Activated CD4-positive, alpha-beta T cell treated with anti-CD3 and anti-CD28 coated beads, Interleukin-2, amount 10 ng/mL, durations not matched to agents 24 days and 14 days (primary cell): ENCODE measurements at regions of chr1 and their contacts with region 1.

Region 1: DNA sequence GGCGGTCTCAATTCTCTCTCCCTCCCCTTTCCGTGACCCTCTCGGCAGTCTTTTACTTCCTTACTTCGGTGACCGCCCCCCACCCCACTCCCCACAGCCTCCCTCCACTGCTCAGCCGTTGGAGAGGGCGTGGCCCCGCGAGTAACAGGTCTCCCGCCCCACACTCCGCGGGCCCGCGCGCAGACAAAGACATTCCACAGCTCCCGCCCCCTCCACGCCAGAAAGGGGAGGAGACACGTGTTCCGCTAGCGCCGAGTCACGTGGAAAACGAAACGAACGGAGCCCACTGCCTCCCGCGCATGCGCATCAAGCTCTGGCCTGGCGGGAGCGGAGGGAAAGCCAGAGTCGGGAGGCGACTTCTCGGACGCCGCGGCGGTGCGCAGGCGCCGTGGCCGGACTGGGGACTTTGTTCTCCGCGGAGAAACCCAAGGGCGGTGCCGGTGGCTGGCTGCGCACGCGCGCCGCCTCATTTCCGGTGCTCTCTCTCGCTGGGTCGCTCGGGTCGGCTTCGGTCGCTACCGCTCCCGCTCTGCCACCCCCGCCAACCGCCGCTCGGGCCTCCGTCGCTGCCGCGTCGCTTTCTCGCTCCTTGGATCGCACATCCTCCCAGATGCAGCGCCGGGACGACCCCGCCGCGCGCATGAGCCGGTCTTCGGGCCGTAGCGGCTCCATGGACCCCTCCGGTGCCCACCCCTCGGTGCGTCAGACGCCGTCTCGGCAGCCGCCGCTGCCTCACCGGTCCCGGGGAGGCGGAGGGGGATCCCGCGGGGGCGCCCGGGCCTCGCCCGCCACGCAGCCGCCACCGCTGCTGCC is at the start of gene KHDRBS1:
- DNase-seq: peak; percentile 100
- H3K4me3 Mint-ChIP-seq: peak within 1 kb of the TSS; percentile 100
- H3K27ac Mint-ChIP-seq: peak within 1 kb of the TSS; percentile 96
- H3K4me1 Mint-ChIP-seq: peaks cover 37% of the 10 kb centered on the region
- H3K27me3 Mint-ChIP-seq: peaks cover 4% of the 10 kb centered on the region
- total RNA-seq, gene KHDRBS1: 174 and 175 TPM in 2 replicates

Region 2: DNA sequence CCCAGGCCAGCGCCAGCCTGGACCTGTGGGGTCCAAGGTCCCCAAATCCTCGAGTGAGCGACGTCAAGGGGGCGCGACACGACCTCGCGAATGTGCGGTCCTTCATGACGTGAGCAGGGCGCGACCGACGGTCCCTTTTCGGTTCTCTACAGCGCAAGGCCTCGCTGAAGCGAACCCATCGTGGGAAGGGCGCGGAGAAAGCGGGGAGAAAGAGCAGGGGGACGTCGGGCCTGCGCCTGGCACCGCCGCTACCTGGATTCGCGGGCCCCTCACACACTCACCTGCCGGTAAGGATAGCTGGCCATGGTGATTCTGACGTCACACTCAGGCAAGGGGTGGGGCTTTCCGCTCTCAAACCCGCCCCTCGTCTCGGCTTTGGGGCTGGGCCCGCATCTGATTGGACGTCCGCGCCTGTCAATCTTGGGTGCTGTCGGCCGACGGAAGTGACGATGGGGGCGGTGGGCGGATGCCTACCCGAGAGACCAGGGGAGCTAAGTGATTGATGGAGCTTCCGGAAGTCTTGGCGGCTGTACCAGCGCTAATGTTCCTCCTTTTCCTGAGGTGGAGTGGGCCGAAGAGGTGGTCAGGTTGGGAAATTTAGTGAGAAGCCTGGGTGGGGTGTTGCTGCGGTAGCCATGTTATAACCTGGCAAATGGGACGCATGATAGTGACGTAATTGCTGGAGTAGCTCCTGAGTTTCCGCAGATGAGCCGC is 368.9 kb before region 1 on chr1 and contains the start of gene PEF1:
- intact Hi-C with region 1: loop called (anchors 5 kb)
- DNase-seq: peak; percentile 100
- H3K4me3 Mint-ChIP-seq: peak within 1 kb of the TSS; percentile 97
- H3K27ac Mint-ChIP-seq: peak within 1 kb of the TSS; percentile 100
- H3K4me1 Mint-ChIP-seq: peaks cover 20% of the 10 kb centered on the region
- H3K27me3 Mint-ChIP-seq: no peaks in the 10 kb centered on the region
- total RNA-seq, gene PEF1: 64.0 and 64.4 TPM in 2 replicates

Region 3: GRCh38 chr1:31753707-31754349 is 259.8 kb before region 1 on chr1:
- intact Hi-C with region 1: no loop called
- DNase-seq: no peak
- H3K4me3 Mint-ChIP-seq: no peak overlapping the region
- H3K27ac Mint-ChIP-seq: no peak overlapping the region
- H3K4me1 Mint-ChIP-seq: peaks cover 14% of the 10 kb centered on the region
- H3K27me3 Mint-ChIP-seq: peaks cover 20% of the 10 kb centered on the region

Region 4: GRCh38 chr1:31938174-31938950 is 75.2 kb before region 1 on chr1 and contains the start of gene PTP4A2:
- intact Hi-C with region 1: loop called (anchors 2 kb)
- DNase-seq: peak; percentile 96
- H3K4me3 Mint-ChIP-seq: peak within 1 kb of the TSS; percentile 95
- H3K27ac Mint-ChIP-seq: peak within 1 kb of the TSS; percentile 96
- H3K4me1 Mint-ChIP-seq: peaks cover 66% of the 10 kb centered on the region
- H3K27me3 Mint-ChIP-seq: no peaks in the 10 kb centered on the region
- total RNA-seq, gene PTP4A2: 363 and 390 TPM in 2 replicates

Region 5: DNA sequence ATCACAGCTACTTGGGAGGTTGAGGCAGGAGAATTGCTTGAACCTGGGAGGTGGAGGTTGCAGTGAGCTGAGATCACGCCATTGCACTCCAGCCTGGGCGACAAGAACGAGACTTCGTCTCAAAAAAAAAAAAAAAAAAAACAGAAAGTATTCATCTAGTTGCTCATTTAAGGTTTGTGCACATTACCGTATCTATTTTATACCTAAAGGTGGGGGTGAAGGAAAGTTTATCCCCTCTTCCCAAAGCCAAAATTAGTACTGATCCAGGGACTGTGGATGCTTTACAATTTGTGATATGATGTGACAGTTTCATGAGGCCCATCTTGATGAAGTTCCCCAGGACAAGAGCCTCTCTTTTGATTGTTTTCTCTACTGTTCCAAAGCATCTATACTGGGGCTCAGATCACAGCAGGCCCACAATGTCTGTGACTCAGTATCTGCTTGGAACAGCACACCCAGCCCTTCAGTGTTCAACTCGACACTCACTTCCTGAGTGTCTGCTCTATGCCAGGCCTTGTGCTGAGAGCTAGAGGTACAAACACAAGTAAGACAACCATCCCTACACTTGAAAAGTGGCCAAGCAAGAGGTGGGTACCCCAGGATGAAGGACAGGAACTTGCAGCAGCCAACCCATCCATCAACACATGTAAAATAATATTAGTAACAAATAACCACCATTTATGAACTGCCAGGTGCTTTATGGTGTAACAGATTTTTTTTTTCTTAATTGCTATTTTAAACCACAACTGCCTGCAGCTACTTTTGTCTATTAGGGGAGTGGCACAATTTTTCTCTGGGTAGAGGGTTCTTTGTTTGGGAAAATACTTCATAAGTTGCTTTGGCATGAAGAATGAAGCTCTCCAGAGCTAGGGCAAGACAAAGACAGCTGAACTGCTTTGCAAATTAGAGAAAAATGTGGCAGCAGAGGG is 28.9 kb before region 1 on chr1:
- intact Hi-C with region 1: loop called (anchors 2 kb)
- DNase-seq: peak; percentile 76
- H3K4me3 Mint-ChIP-seq: peak overlapping the region; percentile 71
- H3K27ac Mint-ChIP-seq: peak overlapping the region; percentile 95
- H3K4me1 Mint-ChIP-seq: peaks cover 47% of the 10 kb centered on the region
- H3K27me3 Mint-ChIP-seq: no peaks in the 10 kb centered on the region

Region 6: DNA sequence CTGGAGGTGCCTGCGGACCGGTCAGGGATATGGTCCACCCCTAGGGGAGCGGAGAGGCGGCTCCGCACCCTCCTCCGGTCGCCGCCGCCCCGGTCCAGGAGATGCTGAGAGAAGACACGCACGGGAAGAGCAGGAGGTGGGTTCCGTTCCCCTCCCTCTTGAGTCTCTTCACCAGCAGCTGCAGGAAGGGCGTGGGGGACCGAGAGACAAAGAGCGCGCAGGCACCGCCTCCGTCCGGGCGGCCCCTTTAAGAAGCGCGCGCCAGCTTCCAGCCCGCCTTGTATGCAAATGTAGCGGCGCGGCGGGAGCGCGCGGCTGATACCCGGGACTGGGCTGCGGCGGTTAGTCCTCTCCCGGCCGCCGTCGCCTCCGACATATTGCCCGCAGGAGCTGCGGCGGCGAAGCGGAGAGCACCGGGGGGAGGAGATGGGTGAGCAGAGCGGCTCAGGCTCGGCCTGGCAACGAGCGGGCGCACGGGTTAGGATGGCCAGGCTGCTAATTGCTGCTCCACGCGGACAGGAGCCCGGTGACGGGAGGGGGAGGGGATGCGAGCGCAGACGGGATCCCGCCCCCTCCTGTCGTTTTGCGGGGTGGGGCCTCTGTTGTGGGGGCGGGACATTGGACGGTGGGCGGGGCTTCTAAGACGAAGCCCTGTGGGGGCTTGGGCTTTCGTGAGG is 59.2 kb after region 1 on chr1 and contains the start of gene TMEM39B:
- intact Hi-C with region 1: loop called (anchors 5 kb)
- DNase-seq: peak; percentile 98
- H3K4me3 Mint-ChIP-seq: peak within 1 kb of the TSS; percentile 92
- H3K27ac Mint-ChIP-seq: peak within 1 kb of the TSS; percentile 96
- H3K4me1 Mint-ChIP-seq: peaks cover 43% of the 10 kb centered on the region
- H3K27me3 Mint-ChIP-seq: no peaks in the 10 kb centered on the region
- total RNA-seq, gene TMEM39B: 34.5 and 38.0 TPM in 2 replicates

Region 7: GRCh38 chr1:32179443-32180185 is 166.0 kb after region 1 on chr1 and contains the start of gene TXLNA:
- intact Hi-C with region 1: loop called (anchors 5 kb)
- DNase-seq: peak; percentile 97
- H3K4me3 Mint-ChIP-seq: peak within 1 kb of the TSS; percentile 98
- H3K27ac Mint-ChIP-seq: peak within 1 kb of the TSS; percentile 99
- H3K4me1 Mint-ChIP-seq: peaks cover 39% of the 10 kb centered on the region
- H3K27me3 Mint-ChIP-seq: no peaks in the 10 kb centered on the region
- total RNA-seq, gene TXLNA: 105 and 106 TPM in 2 replicates